ENCODE measurements at regions of chr10 and their contacts with region 1.

Region 1: DNA sequence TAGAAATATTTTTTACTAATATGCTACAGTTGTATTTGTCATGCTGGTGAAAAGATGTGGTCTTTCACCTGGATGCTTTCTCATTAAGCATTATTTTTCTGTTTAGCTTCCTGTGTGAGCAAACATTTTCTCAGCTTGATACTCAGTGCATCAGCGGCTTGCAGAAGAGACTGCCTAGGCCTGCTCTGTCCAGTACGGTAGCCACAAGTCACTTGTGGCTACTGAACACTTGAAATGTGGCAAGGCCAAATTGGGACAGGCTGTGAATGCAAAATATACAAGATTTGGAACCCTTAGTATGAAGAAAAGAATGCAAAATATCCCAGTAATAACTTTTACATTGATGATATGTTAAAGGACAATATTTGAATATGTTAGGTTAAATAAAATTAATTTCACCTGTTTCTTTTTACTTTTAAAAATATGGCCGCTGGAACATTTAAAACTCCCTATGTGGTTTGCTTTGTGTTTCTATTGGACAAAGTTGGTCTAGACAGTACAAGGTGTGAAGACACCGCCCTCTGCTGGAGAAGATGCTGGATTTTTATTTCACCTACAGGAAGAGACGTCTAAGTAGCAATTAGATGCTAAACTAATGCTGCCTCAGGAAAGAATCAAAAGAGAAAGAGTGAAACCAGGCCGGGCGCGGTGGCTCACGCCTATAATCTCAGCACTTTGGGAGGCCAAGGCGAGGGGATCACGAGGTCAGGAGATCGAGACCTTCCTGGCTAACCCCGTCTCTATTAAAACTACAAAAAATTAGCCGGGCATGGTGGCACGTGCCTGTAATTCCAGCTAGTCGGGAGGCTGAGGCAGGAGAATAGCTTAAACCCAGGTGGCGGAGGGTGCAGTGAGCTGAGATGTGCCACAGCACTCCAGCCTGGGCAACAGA is 5.3 kb downstream of the SRGN start:
- DNase-seq: peak in 2 of 3 donors; percentile 37 to 70
- ATAC-seq: peak; percentile 77 to 86 (median 83)
- H3K4me3 ChIP-seq: no peak overlapping the region
- H3K27ac ChIP-seq: peak overlapping the region in 1 of 3 donors; percentile 24
- H3K4me1 ChIP-seq: no peaks in the 10 kb centered on the region
- H3K27me3 ChIP-seq: no peaks in the 10 kb centered on the region
- CTCF ChIP-seq: peak; percentile 80 to 87 (median 82)
- POLR2A ChIP-seq: no peak

Region 2: DNA sequence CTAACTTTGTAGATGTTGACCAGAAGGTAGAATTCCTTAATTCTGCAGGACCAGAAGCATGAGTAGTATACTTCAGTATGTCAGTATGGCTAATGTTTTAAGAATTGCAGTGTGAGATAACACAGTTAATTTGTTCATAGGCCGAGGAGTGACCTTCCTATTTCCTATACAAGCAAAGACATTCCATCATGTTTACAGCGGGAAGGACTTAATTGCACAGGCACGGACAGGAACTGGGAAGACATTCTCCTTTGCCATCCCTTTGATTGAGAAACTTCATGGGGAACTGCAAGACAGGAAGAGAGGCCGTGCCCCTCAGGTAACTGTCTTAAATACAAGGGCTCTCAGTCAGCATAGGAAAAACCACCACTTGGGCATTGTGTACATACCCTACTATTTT is 130.1 kb before region 1 on chr10:
- intact Hi-C with region 1: no loop called
- DNase-seq: no peak
- ATAC-seq: no peak
- H3K4me3 ChIP-seq: no peak overlapping the region
- H3K27ac ChIP-seq: no peak overlapping the region
- H3K4me1 ChIP-seq: peaks cover 0 to 1% (median 0%) of the 10 kb centered on the region in 4 donors
- H3K27me3 ChIP-seq: no peaks in the 10 kb centered on the region
- CTCF ChIP-seq: no peak
- POLR2A ChIP-seq: no peak

Region 3: GRCh38 chr10:69004821-69005220 is 88.4 kb before region 1 on chr10:
- intact Hi-C with region 1: loop called in 1 of 2 experiments (anchors 10 kb)
- DNase-seq: no peak
- ATAC-seq: peak in 3 of 4 donors; percentile 52 to 65 (median 62)
- H3K4me3 ChIP-seq: no peak overlapping the region
- H3K27ac ChIP-seq: no peak overlapping the region
- H3K4me1 ChIP-seq: no peaks in the 10 kb centered on the region
- H3K27me3 ChIP-seq: no peaks in the 10 kb centered on the region
- CTCF ChIP-seq: peak; percentile 42 to 53 (median 48)
- POLR2A ChIP-seq: no peak

Region 4: DNA sequence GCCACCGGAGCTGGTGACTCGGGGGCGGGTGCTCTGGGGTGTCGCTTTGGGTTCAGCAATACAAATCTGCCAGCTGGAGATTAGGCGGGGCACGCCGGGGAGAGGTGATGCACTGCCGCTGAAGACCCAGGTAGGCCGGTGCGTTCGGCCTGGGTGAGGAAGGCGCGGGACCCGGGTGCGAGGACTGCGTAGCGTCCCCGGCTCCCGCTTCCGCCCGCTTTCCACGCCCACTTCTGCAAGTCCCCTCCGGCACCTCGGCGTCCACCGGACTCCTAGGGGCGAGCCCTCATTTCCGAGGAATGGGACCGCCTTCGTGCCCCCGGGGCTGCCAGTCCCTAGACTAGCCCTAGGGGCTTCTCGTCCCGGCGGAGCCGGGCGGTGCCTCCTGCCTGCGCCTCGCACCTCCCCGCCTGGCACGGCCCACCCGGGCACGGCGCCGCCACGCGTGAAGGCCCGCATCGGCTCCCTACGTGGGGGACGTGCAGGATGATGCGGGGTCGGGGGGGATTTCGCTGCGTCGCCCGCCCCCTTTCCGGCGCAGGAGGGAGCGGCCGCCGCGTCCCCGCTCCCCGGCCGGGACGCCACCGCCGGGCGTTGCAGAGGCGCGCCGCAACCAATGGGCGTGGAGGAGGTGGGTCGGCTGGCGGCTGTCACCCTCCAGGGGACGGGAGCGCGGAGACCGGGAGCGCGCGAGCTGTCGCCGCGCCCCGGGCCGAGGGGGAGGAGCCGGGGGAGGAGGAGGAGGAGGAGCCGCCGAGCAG is 225.1 kb after region 1 on chr10:
- intact Hi-C with region 1: no loop called
- DNase-seq: peak; percentile 80 to 91 (median 88)
- ATAC-seq: peak; percentile 87 to 94 (median 92)
- H3K4me3 ChIP-seq: peak overlapping the region; percentile 60 to 75 (median 67)
- H3K27ac ChIP-seq: peak overlapping the region; percentile 62 to 89 (median 74)
- H3K4me1 ChIP-seq: peaks cover 0 to 7% (median 0%) of the 10 kb centered on the region in 4 donors
- H3K27me3 ChIP-seq: no peaks in the 10 kb centered on the region
- CTCF ChIP-seq: no peak
- POLR2A ChIP-seq: no peak